SK-N-SH (cell line): ENCODE measurements at regions of chr19 and their contacts with region 1.

Region 1: DNA sequence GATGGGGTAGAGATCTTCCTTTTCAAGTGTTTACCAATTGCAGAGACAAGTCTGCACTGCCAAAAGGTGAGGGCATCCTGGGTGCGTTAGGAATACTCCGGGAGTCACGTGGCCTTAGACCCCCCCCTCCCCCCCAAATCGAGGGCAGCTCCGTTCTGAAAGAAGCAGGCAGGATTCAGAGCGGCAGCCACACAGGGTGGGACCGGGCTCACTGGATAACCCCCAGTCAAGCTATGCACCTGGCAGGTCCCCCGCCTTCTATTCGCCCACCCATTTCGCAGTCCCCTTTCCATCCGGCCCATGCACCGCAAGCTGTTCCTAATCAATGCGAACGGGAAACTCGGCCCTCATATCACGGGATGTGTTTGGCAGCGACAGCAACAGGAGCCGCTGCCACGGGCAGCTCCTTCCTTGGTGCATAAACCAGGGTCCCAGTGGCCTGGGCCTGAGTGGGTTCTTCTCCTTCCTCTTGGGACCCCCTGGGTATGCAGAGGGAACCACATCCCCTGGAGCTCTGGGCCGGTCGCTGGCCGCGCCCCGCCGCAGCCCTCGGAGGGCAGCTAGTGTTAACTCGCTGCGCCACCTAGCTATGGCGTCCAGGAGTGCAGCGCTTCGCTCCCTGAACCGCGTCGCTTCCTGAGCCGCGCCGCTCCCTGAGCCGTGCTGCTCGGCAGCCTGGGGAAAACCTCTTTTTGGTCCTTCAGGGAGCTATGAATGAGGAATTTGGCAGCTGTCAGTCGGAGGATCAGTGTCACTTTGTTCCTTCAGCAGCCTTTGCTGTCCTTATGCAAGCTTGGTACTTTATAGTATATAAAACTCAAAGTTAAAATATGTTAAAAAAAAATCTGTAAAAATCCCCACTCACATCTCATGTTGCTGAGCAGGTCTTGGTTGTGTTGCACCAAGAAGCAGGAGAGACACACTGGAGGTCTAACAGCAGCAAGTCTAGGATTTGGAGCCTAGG is 41.4 kb downstream of the LYL1 start:
- DNase-seq: peak; percentile 92
- H3K4me3 ChIP-seq: peak overlapping the region; percentile 37 to 58; a peak in 3 of 4 replicates
- H3K27ac ChIP-seq: peak overlapping the region; percentile 52 to 85; a peak in 3 of 4 replicates
- H3K4me1 ChIP-seq: peaks cover 49 to 89% of the 10 kb centered on the region in 2 experiments
- H3K27me3 ChIP-seq: no peaks in the 10 kb centered on the region
- CTCF ChIP-seq: peak; percentile 94
- EP300 ChIP-seq: no peak
- RAD21 ChIP-seq: peak; percentile 91

Region 2: DNA sequence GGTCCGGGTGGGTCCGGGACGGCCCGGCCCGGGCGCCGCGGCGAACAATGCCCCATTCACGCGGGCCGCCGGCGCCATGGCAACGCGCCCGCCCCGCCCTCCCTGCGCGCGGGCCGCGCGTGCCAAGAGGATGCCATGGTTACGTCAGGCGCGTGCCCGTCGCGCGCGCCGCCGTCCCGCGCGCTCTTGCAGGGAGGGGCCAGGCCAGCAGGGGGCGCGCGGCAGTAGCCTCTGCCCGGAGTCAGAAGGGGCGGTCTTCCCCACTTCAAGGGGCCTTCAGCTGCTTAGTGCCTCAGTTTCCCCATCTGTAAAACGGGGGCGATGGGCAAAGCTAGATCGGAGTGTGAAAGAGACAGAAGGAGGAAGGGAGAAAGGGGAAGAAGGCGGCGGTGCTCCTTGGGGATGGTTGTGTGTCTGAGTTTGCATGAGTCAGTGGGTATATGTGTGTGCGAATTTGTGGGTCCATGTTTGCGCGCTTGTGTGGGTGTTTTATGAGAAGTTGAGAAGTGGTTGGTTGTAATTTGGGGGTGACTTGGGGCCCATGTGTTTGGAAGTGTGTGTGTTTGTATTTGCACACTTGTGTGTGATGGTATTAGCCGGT is 77.6 kb before region 1 on chr19:
- CTCF ChIA-PET with region 1: interaction called, 369 read pairs
- POLR2A ChIA-PET with region 1: interaction called, 6 read pairs
- DNase-seq: peak; percentile 98
- H3K4me3 ChIP-seq: peak overlapping the region; percentile 34 to 39; a peak in 3 of 4 replicates
- H3K27ac ChIP-seq: peak overlapping the region in 1 of 2 experiments; percentile 2; a peak in 1 of 4 replicates
- H3K4me1 ChIP-seq: peaks cover 0 to 8% of the 10 kb centered on the region in 2 experiments; a peak in 1 of 4 replicates
- H3K27me3 ChIP-seq: no peaks in the 10 kb centered on the region
- CTCF ChIP-seq: peak; percentile 88
- EP300 ChIP-seq: no peak
- RAD21 ChIP-seq: peak; percentile 82

Region 3: DNA sequence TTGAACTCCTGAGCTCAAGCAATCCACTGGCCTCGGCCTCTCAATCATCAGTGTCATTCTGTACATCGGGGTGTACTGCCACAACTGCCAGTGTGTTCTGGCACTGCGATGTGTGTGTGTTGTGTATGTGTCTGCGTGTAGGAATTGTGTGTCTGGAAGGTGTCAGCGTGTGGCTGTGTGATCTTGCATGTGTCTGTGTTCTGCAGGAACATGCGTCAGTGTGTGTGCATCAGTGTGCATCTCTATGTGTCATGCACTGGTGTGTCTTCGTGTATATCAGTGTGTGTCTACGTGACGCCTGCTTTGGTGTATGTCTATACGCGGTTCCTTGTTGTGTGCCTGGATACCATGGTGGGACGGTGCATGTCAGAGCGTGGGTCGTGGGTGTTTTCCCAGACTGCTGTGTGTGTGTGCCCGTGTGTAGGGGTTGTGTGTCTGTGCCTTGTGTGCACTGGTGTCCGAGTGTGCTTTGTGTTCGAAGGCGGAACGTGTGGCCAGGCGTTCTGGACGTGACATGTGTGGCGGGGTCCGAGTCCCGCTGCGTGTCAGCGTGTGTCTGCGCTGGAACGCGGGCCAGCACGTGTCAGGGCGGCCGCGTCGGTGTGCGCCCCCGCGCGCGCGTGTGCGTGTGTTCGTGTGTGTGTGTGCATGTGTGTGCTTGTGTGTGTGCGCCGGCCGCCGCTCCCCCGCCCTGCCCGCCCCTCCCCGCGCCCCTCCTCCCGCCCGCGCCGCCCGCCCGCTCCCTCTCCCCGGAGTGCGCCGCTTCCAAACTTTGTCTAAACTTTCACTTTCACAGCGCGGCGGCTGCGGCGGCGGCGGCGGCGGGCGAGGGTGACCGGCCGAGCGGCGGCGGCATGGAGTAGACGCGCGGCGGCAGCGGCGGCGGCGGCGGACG is 66.3 kb before region 1 on chr19 and contains the start of gene NFIX:
- CTCF ChIA-PET with region 1: interaction called, 13 read pairs
- POLR2A ChIA-PET with region 1: interaction called, 3 read pairs
- DNase-seq: peak; percentile 86
- H3K4me3 ChIP-seq: peak within 1 kb of the TSS; percentile 57 to 77
- H3K27ac ChIP-seq: no peak within 1 kb of the TSS; a peak in 1 of 4 replicates
- H3K4me1 ChIP-seq: peaks cover 0 to 17% of the 10 kb centered on the region in 2 experiments; a peak in 1 of 4 replicates
- H3K27me3 ChIP-seq: no peaks in the 10 kb centered on the region
- CTCF ChIP-seq: no peak
- EP300 ChIP-seq: no peak
- RAD21 ChIP-seq: no peak
- polyA plus RNA-seq, gene NFIX: 5.1 and 14.8 TPM in 2 replicates

Region 4: GRCh38 chr19:13007292-13008045 is 53.8 kb before region 1 on chr19:
- CTCF ChIA-PET with region 1: interaction called, 18 read pairs
- POLR2A ChIA-PET with region 1: no interaction called
- DNase-seq: peak; percentile 42
- H3K4me3 ChIP-seq: no peak overlapping the region
- H3K27ac ChIP-seq: no peak overlapping the region
- H3K4me1 ChIP-seq: no peaks in the 10 kb centered on the region
- H3K27me3 ChIP-seq: no peaks in the 10 kb centered on the region
- CTCF ChIP-seq: peak; percentile 20; the same call in 1 of the 2 replicates
- EP300 ChIP-seq: no peak
- RAD21 ChIP-seq: no peak

Region 5: DNA sequence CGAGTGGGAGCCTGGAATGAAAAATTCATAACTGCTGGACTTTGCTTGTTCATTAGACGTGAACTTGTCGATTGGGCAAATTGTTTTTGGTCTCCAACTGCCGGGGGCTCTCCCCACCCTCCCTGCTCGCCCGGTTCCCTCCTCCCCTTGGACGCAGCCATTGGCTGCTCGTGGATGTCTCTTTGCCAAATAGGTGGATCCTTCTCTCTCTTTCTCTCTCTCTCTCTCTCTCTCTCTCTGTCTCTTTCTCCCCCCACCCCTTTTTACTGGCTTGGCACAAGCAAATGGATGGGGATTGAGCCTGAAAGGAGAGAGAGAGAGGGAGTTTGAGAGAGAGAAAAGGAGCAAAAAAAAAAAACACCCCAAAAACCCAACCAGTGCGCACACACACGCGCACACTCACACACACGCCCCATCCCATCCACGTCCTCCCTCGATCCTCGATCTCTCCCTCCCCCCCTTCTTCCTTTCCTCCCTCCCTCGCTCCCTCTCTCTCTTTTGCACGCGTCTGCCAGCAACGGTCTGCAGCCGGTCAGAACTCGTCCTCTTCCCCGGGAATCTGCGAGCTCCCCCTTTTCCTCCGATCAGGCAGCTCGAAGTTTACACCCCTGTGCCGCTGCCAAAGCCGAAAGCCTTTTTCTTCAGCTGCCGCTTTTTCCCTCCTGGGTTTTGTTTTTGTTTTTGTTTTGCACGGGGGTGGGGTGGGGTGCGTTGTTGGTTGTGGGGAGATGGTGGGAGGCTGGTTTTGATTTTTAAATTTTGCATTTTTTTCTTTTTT is 38.2 kb before region 1 on chr19:
- CTCF ChIA-PET with region 1: interaction called, 167 read pairs
- POLR2A ChIA-PET with region 1: interaction called, 6 read pairs
- DNase-seq: peak; percentile 87
- H3K4me3 ChIP-seq: peak overlapping the region; percentile 36 to 67
- H3K27ac ChIP-seq: peak overlapping the region; percentile 82 to 91
- H3K4me1 ChIP-seq: peaks cover 31 to 57% of the 10 kb centered on the region in 2 experiments
- H3K27me3 ChIP-seq: no peaks in the 10 kb centered on the region
- CTCF ChIP-seq: peak; percentile 19; the same call in 1 of the 2 replicates
- EP300 ChIP-seq: peak in 1 of 2 experiments; percentile 22; a peak in 2 of 4 replicates
- RAD21 ChIP-seq: no peak

Region 6: GRCh38 chr19:13044231-13044836 is 16.9 kb before region 1 on chr19:
- CTCF ChIA-PET with region 1: interaction called, 28 read pairs
- POLR2A ChIA-PET with region 1: no interaction called
- DNase-seq: no peak
- H3K4me3 ChIP-seq: no peak overlapping the region
- H3K27ac ChIP-seq: no peak overlapping the region
- H3K4me1 ChIP-seq: peaks cover 9 to 24% of the 10 kb centered on the region in 2 experiments; a peak in 2 of 4 replicates
- H3K27me3 ChIP-seq: no peaks in the 10 kb centered on the region
- CTCF ChIP-seq: no peak
- EP300 ChIP-seq: no peak
- RAD21 ChIP-seq: no peak

Region 7: GRCh38 chr19:13082192-13083007 is 21.2 kb after region 1 on chr19:
- CTCF ChIA-PET with region 1: interaction called, 55 read pairs
- POLR2A ChIA-PET with region 1: interaction called, 9 read pairs
- DNase-seq: peak; percentile 66
- H3K4me3 ChIP-seq: no peak overlapping the region
- H3K27ac ChIP-seq: peak overlapping the region in 1 of 2 experiments; percentile 23; a peak in 2 of 4 replicates
- H3K4me1 ChIP-seq: peaks cover 10 to 33% of the 10 kb centered on the region in 2 experiments; a peak in 3 of 4 replicates
- H3K27me3 ChIP-seq: no peaks in the 10 kb centered on the region
- CTCF ChIP-seq: peak; percentile 23
- EP300 ChIP-seq: no peak
- RAD21 ChIP-seq: peak; percentile 61